Ovary (tissue), 10 donors: ENCODE measurements at regions of chr20 and their contacts with region 1.

Region 1: DNA sequence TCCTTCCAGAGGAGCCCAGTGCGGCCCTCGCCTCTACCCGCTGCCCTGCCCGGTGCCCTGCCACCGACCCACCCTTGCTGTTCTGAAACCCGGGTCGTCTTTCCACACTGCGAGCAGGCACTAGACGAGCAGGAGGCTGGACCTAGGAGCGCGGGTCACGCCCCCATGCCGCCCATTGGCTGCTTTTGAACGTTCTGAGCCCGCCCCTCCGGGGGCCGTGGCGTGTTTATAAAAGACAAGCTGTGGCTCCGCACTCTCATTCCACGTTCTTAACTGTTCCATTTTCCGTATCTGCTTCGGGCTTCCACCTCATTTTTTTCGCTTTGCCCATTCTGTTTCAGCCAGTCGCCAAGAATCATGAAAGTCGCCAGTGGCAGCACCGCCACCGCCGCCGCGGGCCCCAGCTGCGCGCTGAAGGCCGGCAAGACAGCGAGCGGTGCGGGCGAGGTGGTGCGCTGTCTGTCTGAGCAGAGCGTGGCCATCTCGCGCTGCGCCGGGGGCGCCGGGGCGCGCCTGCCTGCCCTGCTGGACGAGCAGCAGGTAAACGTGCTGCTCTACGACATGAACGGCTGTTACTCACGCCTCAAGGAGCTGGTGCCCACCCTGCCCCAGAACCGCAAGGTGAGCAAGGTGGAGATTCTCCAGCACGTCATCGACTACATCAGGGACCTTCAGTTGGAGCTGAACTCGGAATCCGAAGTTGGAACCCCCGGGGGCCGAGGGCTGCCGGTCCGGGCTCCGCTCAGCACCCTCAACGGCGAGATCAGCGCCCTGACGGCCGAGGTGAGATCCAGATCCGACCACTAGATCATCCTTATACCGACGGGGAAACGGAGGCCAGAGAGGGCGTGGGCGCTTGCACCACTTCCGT is at the start of gene ID1:
- DNase-seq: peak; percentile 92 to 96 (median 94)
- H3K4me3 ChIP-seq: peak within 1 kb of the TSS; percentile 41
- H3K27ac ChIP-seq: peak within 1 kb of the TSS; percentile 70 to 73
- H3K4me1 ChIP-seq: peaks cover 4% of the 10 kb centered on the region
- H3K27me3 ChIP-seq: no peaks in the 10 kb centered on the region
- CTCF ChIP-seq: no peak
- EP300 ChIP-seq: no peak
- POLR2A ChIP-seq: peak; percentile 88
- total RNA-seq, gene ID1: 42.6 to 353 (median 64.2) TPM

Region 2: DNA sequence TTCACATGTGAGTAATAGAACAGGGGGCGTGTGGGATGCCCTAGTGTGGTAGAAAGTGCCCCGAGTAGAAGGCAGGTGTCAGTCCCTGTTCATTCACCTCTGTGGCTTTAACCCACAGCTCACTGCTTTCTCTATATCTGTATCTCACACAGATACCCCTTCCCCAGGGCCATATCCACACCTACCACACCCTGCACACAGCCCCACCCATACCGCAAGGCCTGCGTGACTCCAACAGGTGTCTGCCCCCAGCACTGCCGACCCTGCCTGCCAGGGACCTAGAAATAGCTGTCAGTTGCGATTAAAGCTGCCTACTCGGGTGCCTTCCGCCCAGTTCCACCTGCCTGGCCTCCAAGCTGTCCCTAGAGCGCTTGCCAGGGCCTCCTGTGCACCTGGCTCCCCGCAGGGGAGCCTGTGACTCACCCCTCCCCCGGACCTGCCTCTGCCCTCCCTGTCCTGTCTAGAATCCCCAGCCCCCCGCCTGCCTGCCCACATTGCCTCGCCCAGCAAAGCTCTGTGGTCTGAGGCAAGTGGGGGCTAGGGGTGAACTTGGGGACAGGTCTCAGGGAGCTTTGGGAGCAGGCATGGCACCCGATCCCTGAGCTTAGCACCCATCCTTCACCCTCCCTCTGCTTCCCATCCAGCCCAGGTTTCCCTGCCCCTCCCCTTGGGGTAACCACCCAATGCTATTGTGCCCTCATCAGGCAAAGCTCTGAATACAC is 38.4 kb before region 1 on chr20:
- intact Hi-C with region 1: loop called in 3 of 4 experiments (anchors 2 to 5 kb)
- DNase-seq: no peak
- H3K4me3 ChIP-seq: no peak overlapping the region
- H3K27ac ChIP-seq: no peak overlapping the region
- H3K4me1 ChIP-seq: peaks cover 2% of the 10 kb centered on the region
- H3K27me3 ChIP-seq: no peaks in the 10 kb centered on the region
- CTCF ChIP-seq: no peak
- EP300 ChIP-seq: no peak
- POLR2A ChIP-seq: no peak

Region 3: DNA sequence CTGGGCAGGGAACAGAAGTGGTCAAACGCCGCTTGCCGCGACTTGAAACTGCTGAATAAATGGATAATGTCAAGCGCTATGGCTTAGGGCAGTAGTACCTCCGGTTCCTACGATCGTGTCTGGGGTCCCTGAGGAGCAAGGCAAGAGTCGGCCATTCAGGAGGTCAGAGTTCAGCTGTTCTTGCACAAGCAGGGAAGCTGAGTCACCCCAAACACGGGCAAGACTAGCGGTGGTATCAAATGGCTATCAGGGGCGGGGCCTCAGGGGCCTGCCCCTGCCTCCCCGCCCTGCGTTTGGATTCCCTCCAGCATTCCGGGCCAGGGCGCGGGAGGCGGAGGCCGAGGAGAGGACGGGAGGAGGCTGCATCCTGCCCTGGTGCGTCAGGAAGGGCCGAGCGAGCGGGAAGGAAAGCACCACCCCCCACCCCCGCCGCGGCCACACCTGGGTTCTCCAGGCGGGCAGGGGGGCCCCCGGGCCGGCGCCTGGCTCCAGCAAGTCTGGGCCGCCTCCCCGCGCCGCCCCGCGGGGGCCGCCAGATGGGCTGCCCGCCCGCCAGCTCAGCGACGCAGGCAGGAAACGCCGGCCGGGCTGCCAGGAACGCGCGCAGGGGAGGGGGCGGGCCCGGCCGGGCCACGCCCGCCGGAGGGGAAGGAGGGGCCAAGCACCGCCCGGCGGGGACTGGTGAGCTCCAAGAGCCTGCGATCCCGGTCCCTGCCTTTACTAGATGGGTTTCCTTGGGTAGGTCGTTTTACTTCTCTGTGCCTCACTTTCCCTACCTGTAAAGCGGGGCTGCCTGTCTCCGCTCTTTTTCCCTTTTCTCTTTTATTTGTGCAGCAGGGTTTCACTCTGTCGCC is 32.3 kb before region 1 on chr20:
- intact Hi-C with region 1: loop called in 2 of 4 experiments (anchors 2 to 5 kb)
- DNase-seq: peak; percentile 95 to 98 (median 95)
- H3K4me3 ChIP-seq: peak overlapping the region; percentile 48
- H3K27ac ChIP-seq: peak overlapping the region; percentile 84 to 94
- H3K4me1 ChIP-seq: peaks cover 3% of the 10 kb centered on the region
- H3K27me3 ChIP-seq: no peaks in the 10 kb centered on the region
- CTCF ChIP-seq: peak in 1 of 3 donors; percentile 49
- EP300 ChIP-seq: no peak
- POLR2A ChIP-seq: peak; percentile 74

Region 4: DNA sequence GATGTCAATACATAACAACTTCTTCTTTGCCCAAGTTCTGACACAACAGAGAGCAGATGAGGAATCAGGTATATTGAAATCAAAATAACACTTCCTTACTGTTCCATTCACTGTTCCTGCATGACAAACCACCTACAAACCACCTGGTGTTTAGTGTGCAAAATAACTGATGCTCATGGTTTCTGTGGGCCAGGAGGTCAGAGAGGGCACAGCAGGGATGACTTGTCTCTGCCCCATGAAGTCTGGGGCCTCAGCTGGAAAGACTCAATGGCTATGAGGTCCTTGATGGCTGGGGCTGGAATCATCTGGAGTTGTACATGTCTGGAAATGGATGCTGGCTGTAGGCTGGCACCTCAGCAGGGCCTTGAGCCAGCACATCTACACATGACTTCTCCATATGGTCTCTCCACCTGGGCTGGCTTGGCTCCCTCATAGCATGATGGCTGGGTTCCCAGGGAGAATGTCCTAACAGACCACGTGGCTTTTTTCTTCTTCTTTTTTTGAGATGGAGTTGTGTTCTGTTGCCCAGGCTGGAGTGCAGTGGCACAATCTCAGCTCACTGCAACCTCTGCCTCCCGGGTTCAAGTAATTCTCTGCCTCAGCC is 25.0 kb after region 1 on chr20:
- intact Hi-C with region 1: no loop called
- DNase-seq: no peak
- H3K4me3 ChIP-seq: no peak overlapping the region
- H3K27ac ChIP-seq: no peak overlapping the region
- H3K4me1 ChIP-seq: no peaks in the 10 kb centered on the region
- H3K27me3 ChIP-seq: no peaks in the 10 kb centered on the region
- CTCF ChIP-seq: no peak
- EP300 ChIP-seq: no peak
- POLR2A ChIP-seq: no peak